Posterior vena cava (tissue), 2 donors: ENCODE measurements at regions of chr18 and their contacts with region 1.

Region 1: DNA sequence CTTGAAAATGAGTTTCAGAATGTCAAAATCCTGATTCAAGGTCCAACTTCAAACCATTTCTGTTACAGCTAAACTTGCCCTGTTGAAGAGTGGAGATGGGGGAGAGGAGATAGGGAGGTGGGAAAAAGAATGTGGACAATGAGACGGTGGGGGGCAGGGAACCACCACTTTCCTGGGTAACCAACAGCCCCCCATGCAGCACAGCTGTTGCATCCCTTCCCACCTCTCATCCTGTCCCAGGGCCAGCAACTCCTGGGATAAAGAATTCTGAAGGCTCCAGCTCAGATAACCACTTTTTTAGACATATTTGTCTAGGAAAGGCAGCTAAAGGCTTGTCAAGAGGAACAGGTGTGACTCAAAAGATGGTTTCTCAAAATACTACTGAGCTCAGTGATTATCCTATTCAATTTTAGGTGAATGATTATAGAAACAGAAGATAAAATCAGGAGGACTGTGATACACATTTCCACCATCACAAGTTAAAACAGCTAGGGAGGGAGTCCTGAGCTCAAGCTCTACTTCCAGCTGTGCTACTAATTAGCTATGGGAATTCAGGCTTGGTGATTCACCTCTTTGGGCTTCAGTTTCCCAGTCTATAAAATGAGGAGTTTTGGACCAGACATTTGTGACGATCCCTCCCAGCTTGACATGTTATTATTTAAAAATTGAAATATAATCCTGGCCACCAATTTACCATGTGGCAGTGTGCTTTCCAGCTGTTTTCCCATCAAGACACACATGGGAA is 36.3 kb downstream of the HDHD2 start:
- DNase-seq: no peak

Region 2: GRCh38 chr18:46868169-46868921 is 245.6 kb before region 1 on chr18:
- intact Hi-C with region 1: loop called in 1 of 2 experiments (anchors 5 kb)
- DNase-seq: no peak